Mammary epithelial cell (primary cell): ENCODE measurements at regions of chr18 and their contacts with region 1.

Region 1: DNA sequence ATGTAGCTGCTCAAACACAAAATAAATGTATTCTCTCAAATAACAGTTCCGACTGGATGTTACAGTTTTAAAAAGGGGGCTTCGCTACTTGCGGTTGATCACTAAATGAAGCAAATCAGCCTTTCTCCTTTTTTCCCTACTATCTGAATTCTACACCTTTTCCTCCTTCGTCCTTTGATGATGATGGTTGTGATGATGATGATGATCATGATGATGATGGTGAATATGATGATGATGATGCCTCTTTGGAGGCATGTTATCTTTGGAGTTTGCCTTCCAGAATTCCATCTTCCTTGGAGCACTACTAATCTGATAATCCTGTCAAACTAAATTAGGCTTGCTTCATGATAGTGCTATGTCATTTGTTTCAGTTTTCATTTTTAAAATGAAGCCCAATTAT is 1073.3 kb downstream of the SOCS6 start:
- DNase-seq: no peak
- H3K4me3 ChIP-seq: no peak overlapping the region
- H3K27ac ChIP-seq: no peak overlapping the region
- H3K4me1 ChIP-seq: no peaks in the 10 kb centered on the region
- H3K27me3 ChIP-seq: no peaks in the 10 kb centered on the region
- CTCF ChIP-seq: no peak

Region 2: DNA sequence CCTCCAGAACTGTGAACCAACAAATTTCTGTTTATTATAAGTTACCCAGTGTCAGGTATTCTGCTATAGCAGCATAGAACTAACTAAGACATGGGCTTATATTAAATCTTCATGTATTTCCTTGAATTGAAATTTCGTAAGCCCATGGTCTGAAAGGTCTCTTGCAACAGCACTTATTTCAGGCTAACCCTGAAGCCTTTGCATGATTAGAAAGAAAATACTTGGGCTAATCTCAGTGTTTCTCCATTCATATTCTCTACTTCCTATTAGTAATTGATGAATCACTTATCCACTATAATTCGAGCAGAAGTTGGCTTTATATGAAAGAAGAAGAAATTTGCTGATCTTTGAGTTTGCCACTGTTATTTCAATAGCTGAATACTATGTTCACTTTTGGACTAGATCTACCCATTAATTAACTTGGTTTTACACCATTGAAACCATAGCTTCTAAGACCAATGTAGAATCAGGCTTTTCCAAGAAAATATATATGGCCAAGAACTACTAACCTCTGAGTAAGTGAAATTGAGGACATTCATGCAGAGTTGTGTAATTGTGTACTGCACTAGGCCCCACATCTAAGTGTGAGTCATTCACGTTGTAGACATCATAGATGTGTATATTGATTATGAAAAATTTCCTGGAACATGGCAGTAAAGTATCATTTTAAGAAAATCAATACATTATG is 341.7 kb before region 1 on chr18:
- CTCF ChIA-PET with region 1: no interaction called
- dilution Hi-C with region 1: no loop called
- in situ Hi-C with region 1: no loop called
- intact Hi-C with region 1: no loop called
- DNase-seq: no peak
- H3K4me3 ChIP-seq: no peak overlapping the region
- H3K27ac ChIP-seq: no peak overlapping the region
- H3K4me1 ChIP-seq: no peaks in the 10 kb centered on the region
- H3K27me3 ChIP-seq: no peaks in the 10 kb centered on the region
- CTCF ChIP-seq: no peak

Region 3: DNA sequence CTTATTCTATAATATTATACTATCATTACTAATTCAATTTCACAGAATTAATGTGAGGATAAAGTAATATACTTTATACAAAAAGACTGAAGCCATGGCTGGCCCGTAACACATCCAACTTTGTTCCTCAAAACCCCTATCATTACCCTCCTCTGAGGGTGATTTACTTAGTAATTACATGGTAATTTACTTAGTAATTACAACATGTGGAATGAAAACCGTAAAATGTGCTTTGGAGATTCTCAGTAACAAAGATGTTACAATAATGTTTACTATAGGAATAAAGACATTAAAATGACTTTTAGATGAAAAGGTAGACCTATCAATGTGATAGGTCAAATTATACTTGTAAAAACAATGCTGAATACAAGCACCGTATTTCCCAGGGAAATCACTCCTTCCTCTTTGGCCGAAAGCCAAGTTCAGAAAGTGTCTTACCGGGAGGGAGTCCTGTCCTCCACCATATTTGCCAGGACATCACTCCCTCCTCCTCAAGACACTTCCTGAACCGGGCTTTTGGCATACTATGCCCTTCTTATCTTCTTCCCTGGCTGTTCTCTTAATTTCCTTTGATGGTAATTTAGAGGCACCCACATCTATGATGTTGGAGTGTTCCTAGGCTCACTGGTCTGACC is 25.4 kb before region 1 on chr18:
- CTCF ChIA-PET with region 1: interaction called, 17 read pairs
- dilution Hi-C with region 1: no loop called
- in situ Hi-C with region 1: no loop called
- intact Hi-C with region 1: no loop called
- DNase-seq: no peak
- H3K4me3 ChIP-seq: no peak overlapping the region
- H3K27ac ChIP-seq: no peak overlapping the region
- H3K4me1 ChIP-seq: no peaks in the 10 kb centered on the region
- H3K27me3 ChIP-seq: no peaks in the 10 kb centered on the region
- CTCF ChIP-seq: no peak